ENCODE measurements at regions of chr1 and their contacts with region 1.

Region 1: DNA sequence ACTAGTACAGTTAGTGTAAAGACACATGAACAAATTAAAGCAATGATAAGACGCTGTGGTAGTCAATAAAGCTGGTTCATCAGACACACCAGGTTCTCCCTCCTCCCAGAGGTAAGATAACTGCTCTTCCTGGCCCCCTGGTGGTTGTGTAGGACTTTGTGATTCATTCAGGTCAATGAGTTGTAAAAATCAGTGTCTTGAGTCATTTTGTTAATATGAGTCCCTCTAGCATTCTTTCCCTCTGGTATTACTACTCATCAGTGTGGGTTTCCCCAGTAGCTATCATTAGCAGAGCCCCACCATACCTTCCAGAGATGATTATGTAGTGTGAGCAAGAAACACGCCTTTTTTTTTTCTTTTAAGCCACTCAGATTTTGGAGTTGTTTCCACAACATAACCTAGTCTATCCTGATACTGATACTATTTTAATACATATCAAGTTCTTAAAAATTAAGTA is 3.6 kb upstream of the SETDB1 start:
- DNase-seq: peak; percentile 89
- ATAC-seq: peak; percentile 52
- H3K4me3 Mint-ChIP-seq: no peak overlapping the region
- H3K27ac Mint-ChIP-seq: no peak overlapping the region
- H3K4me1 Mint-ChIP-seq: peaks cover 21% of the 10 kb centered on the region
- H3K27me3 Mint-ChIP-seq: no peaks in the 10 kb centered on the region

Region 2: GRCh38 chr1:150820710-150821512 is 101.6 kb before region 1 on chr1:
- CTCF ChIA-PET with region 1: interaction called, 10 read pairs
- POLR2A ChIA-PET with region 1: no interaction called
- DNase-seq: no peak
- ATAC-seq: no peak
- H3K4me3 Mint-ChIP-seq: no peak overlapping the region
- H3K27ac Mint-ChIP-seq: no peak overlapping the region
- H3K4me1 Mint-ChIP-seq: peaks cover 3% of the 10 kb centered on the region
- H3K27me3 Mint-ChIP-seq: no peaks in the 10 kb centered on the region

Region 3: GRCh38 chr1:150890033-150890416 is 32.5 kb before region 1 on chr1:
- CTCF ChIA-PET with region 1: interaction called, 32 read pairs
- POLR2A ChIA-PET with region 1: interaction called, 6 read pairs
- DNase-seq: peak; percentile 27
- ATAC-seq: peak; percentile 87
- H3K4me3 Mint-ChIP-seq: peak overlapping the region; percentile 56
- H3K27ac Mint-ChIP-seq: peak overlapping the region; percentile 58
- H3K4me1 Mint-ChIP-seq: peaks cover 36% of the 10 kb centered on the region
- H3K27me3 Mint-ChIP-seq: no peaks in the 10 kb centered on the region

Measured in activated CD8-positive, alpha-beta T cell treated with anti-CD3 and anti-CD28 coated beads, Interleukin-2, amount 10 ng/mL, durations not matched to agents 7 days and 5 days (primary cell).